Activated CD4-positive, alpha-beta T cell treated with anti-CD3 and anti-CD28 coated beads for 36 hours (primary cell): ENCODE measurements at regions of chr7 and their contacts with region 1.

Region 1: GRCh38 chr7:118330373-118330772 is 105.9 kb downstream of the ANKRD7 start:
- DNase-seq: no peak
- ATAC-seq: no peak
- H3K4me3 Mint-ChIP-seq: no peak overlapping the region
- H3K27ac Mint-ChIP-seq: no peak overlapping the region
- H3K4me1 Mint-ChIP-seq: no peaks in the 10 kb centered on the region
- H3K27me3 Mint-ChIP-seq: no peaks in the 10 kb centered on the region

Region 2: GRCh38 chr7:118369987-118370386 is 39.6 kb after region 1 on chr7:
- CTCF ChIA-PET with region 1: no interaction called
- POLR2A ChIA-PET with region 1: no interaction called
- intact Hi-C with region 1: loop called in 1 of 2 experiments (anchors 2 kb)
- DNase-seq: no peak
- ATAC-seq: no peak
- H3K4me3 Mint-ChIP-seq: no peak overlapping the region
- H3K27ac Mint-ChIP-seq: no peak overlapping the region
- H3K4me1 Mint-ChIP-seq: no peaks in the 10 kb centered on the region
- H3K27me3 Mint-ChIP-seq: peaks cover 4% of the 10 kb centered on the region